Panc1 (cell line): ENCODE measurements at regions of chr6 and their contacts with region 1.

Region 1: GRCh38 chr6:44431118-44431725 is 43.7 kb downstream of the CDC5L start:
- DNase-seq: no peak
- ATAC-seq: peak; percentile 88
- H3K4me3 ChIP-seq: no peak overlapping the region
- H3K27ac ChIP-seq: no peak overlapping the region
- H3K4me1 ChIP-seq: no peaks in the 10 kb centered on the region
- H3K27me3 ChIP-seq: no peaks in the 10 kb centered on the region
- CTCF ChIP-seq: peak; percentile 76; the same call in 1 of the 2 replicates

Region 2: GRCh38 chr6:44456070-44456965 is 25.1 kb after region 1 on chr6:
- CTCF ChIA-PET with region 1: interaction called, 4 read pairs
- POLR2A ChIA-PET with region 1: no interaction called
- in situ Hi-C with region 1: no loop called
- intact Hi-C with region 1: loop called (anchors 2 kb)
- DNase-seq: no peak
- ATAC-seq: peak; percentile 86
- H3K4me3 ChIP-seq: no peak overlapping the region
- H3K27ac ChIP-seq: no peak overlapping the region
- H3K4me1 ChIP-seq: no peaks in the 10 kb centered on the region
- H3K27me3 ChIP-seq: no peaks in the 10 kb centered on the region; the same call in 1 of the 2 replicates
- CTCF ChIP-seq: peak; percentile 93